ENCODE measurements at regions of chr20 and their contacts with region 1.

Region 1: DNA sequence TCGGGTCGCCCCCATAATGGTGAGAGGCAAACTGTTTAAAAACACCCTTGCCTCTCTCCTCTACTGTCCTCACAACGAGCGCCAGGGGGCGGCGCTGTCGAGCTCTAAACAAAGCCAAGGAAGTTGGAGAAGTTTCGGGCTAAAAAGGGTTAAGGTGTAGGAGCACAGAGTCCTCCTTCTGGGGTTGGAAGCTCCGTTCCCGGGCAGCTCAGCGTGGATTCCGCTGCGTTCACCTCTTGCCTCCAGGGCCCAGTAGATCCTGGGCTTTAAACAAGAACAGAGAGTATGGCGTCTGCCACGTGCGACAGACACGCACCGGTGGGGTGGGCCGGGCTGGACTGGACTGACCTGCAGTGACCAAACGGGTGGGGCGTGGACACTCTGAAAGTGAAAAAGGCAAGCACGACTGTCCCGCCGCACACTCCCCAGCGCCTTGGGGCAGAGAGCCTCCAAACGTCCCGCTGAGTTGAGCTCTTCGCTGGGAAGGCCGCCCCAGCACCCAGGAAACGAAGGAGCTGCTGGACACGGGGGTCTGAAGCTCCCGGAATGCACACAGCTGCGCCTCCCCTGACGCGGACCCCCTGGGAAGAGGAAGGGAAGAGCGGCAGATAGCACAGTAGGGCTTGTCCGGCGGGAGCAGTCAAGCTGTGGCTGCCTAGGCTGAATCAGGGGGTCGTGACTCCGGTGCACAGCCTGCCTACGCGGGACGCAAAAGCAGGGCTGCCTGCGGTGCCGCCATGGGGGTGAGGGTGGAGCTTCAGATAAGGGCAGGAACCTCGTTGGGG is 1.6 kb upstream of the THBD start:
- DNase-seq: peak; percentile 84 to 96
- H3K4me3 ChIP-seq: peak overlapping the region; percentile 31
- CTCF ChIP-seq: no peak
- POLR2A ChIP-seq: no peak

Region 2: GRCh38 chr20:22652681-22653588 is 398.1 kb before region 1 on chr20:
- intact Hi-C with region 1: no loop called
- DNase-seq: no peak
- H3K4me3 ChIP-seq: no peak overlapping the region
- CTCF ChIP-seq: no peak
- POLR2A ChIP-seq: no peak

Region 3: DNA sequence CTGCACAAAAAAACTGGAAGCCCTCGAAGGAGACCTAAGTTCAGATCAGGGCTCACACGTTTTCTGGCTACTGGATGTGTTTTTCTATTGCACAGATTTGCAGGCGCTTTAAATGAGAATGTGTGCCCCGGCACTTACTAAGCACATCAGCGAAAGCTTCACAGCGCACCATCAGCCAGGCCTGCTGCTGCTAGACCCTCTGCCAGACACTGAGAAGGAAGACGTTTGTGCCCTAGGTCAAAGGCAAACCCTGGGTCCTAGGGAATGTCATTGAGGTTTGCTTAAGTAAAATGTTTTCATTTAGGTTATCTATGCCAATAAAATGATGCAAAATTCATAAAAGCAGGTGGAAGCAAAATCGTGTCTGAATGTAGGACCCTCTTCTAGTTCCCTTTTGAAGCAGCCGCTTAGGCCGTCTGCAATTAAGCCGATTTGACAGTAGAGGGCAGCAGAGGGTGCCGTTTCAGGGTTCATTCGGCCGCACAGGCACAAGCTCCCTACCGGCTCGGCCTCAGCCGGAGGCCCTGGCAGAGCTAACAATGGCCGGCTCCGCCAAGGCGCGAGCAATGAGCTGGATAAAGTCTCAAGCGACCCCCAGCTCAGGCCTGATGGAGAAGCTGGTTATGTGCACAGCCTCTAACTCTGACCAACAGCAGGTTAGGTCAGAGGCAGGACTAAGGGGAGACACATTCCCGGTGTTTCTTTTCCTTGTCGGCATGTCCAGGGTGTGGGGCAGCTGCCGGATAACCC is 359.5 kb before region 1 on chr20:
- intact Hi-C with region 1: loop called (anchors 10 kb)
- DNase-seq: peak; percentile 57 to 94
- H3K4me3 ChIP-seq: no peak overlapping the region
- CTCF ChIP-seq: peak in 1 of 3 donors; percentile 56
- POLR2A ChIP-seq: no peak

Region 4: DNA sequence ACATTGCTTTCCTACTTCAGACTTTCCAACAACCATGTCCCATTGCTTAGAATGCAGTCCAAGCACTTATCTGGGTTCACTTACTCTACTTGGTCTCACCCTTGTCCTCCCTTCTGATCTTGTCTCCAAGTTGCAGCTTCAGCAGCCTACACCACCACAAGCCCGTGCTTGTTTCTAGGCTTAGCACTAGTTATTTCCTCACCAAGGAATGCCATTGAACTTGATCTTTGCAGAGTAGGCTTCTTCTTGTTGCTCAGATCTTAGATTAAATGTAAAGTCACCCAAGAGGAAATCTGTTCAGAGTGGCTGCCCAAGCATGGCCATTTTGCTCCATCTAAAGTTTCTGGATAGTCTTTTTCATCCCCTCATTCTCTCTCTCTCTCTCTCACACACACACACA is 307.6 kb before region 1 on chr20:
- intact Hi-C with region 1: no loop called
- DNase-seq: no peak
- H3K4me3 ChIP-seq: no peak overlapping the region
- CTCF ChIP-seq: no peak
- POLR2A ChIP-seq: no peak

Region 5: DNA sequence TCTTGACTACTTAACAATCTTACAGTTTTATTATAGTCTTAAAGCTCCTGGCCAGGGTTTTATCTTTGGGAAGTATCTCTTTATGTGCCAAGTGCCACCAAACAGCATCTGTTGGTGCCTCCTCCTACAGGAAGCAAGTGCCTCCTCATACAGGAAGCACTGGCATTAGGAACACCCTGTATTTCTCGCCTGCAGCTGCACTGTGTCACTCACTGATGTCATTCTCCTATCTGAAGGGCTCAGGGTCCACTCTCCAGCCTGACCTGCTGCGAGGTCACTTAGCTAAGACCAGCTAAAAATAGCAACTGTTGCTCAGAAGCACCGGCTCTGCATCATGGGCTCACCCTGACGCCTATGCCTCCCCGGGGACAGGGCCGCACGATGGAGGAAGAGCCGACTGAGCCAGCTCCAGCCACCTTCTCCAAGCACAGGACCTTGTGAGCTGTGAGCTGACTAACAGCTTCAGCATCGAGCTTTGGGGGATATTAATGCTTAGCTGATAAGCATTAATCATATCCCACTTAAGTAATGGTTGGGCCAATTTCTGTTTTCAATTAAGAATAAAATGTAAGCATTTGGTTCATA is 101.4 kb after region 1 on chr20:
- intact Hi-C with region 1: loop called (anchors 10 kb)
- DNase-seq: peak in 1 of 2 donors; percentile 93
- H3K4me3 ChIP-seq: no peak overlapping the region
- CTCF ChIP-seq: no peak
- POLR2A ChIP-seq: no peak

Region 6: GRCh38 chr20:23200918-23201317 is 149.9 kb after region 1 on chr20:
- intact Hi-C with region 1: loop called (anchors 2 kb)
- DNase-seq: peak in 1 of 2 donors; percentile 85
- H3K4me3 ChIP-seq: no peak overlapping the region
- CTCF ChIP-seq: no peak
- POLR2A ChIP-seq: no peak

Region 7: GRCh38 chr20:23331450-23332350 is 280.7 kb after region 1 on chr20:
- intact Hi-C with region 1: loop called (anchors 10 kb)
- DNase-seq: no peak
- H3K4me3 ChIP-seq: no peak overlapping the region
- CTCF ChIP-seq: no peak
- POLR2A ChIP-seq: no peak

Region 8: DNA sequence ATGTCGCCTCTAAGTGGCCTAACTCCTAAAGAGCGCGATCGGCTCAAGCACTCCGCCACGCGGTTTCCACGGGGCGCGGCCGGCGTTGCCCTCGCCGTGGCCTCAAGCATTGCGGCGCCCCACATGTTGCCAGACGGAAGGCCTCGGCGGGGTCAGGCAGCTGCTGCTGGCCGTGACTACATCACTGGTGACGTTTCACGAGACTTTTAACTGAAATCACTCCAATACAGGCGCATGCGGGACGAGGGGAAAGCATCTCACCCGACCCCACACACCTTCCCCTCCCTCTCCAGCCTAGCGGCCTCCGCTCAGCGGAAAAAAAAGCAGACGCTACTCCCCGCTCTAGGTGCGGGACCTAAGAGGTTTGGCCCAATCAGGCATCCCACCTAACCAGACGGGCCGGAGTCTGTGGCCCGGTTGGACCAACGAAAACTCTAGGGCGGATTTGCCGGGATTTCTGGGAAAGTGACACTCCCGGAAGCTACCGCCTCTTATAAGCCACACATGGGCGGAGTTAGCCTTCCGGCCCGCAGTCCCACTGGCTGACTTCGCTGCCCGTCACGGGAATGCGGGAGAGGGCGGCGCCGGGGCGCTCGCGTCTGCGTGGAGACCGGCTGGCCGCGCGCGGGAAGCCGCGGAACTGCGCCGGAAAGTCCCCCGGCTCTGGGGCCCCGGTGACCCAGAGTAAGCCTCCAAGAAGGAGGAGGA is 299.3 kb after region 1 on chr20 and contains the start of gene NXT1:
- intact Hi-C with region 1: loop called (anchors 5 kb)
- DNase-seq: peak; percentile 97 to 99
- H3K4me3 ChIP-seq: peak within 1 kb of the TSS; percentile 89
- CTCF ChIP-seq: no peak
- POLR2A ChIP-seq: peak in 1 of 2 donors; percentile 69
- total RNA-seq, gene NXT1: 29.2 to 40.2 (median 35.1) TPM

Region 9: DNA sequence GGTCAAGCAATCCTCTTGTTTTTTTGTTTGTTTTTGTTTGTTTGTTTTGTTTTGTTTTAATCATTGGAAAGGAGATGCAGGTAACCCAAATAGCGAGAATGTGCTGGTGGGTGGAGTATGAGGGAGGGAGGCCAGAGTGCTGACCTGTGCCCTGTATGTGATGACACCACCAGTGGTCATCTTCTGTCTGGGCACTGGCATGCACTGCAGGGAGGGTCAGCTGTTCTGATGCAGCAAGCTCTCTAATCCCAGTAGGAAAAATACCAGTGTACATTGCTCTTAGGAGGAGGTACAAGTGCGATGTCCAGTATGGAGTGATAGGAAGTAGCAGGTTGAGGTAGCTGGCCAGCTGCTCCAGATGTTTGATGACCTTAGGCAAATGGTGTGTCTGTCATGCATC is 702.5 kb after region 1 on chr20:
- intact Hi-C with region 1: no loop called
- DNase-seq: no peak
- H3K4me3 ChIP-seq: no peak overlapping the region
- CTCF ChIP-seq: no peak
- POLR2A ChIP-seq: no peak

Measured in lower leg skin (tissue), 4 donors.